ENCODE measurements at regions of chr9 and their contacts with region 1.

Region 1: GRCh38 chr9:70451765-70452164 is 37.3 kb upstream of the KLF9 start:
- DNase-seq: no peak
- H3K4me3 ChIP-seq: no peak overlapping the region
- H3K27ac ChIP-seq: no peak overlapping the region
- H3K4me1 ChIP-seq: no peaks in the 10 kb centered on the region
- H3K27me3 ChIP-seq: no peaks in the 10 kb centered on the region
- CTCF ChIP-seq: no peak

Region 2: DNA sequence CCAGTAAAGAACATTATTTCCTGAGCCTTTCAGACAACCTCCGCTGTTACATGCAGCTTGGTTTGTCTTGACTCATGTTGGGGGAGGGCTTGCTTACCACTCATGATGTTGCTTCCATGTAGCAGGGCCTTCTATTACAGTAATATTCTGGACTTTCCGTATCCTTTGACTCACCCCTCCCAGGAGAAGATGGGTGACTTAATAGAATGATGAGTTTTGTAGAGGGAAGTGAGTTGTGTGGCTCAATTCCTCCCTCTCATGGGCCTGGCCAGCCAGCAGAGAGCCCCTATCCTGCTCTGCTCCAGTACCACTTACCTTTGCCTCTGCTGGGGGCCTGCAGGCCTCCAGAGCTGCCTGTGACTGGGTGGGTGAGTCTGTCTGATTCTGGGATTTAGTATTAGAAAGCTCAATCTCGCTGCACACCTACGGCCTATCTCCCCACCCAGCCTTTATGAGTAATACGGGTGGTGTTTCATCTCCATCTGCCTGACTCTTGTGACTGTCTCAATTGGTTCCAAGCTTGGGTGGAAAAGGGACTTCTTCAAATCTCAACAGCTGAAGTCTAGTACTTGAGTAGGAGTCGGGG is 15.3 kb after region 1 on chr9:
- CTCF ChIA-PET with region 1: interaction called, 10 read pairs
- POLR2A ChIA-PET with region 1: no interaction called
- intact Hi-C with region 1: no loop called
- DNase-seq: no peak
- H3K4me3 ChIP-seq: no peak overlapping the region
- H3K27ac ChIP-seq: no peak overlapping the region
- H3K4me1 ChIP-seq: no peaks in the 10 kb centered on the region
- H3K27me3 ChIP-seq: no peaks in the 10 kb centered on the region
- CTCF ChIP-seq: no peak

Measured in A673 (cell line).